Activated naive CD8-positive, alpha-beta T cell treated with anti-CD3 and anti-CD28 coated beads, Interleukin-2, amount 10 ng/mL, durations not matched to agents 7 days and 5 days (primary cell): ENCODE measurements at regions of chr19 and their contacts with region 1.

Region 1: GRCh38 chr19:13978347-13978733 is 26.0 kb downstream of the DCAF15 start:
- DNase-seq: peak; percentile 59
- ATAC-seq: peak; percentile 16
- H3K4me3 Mint-ChIP-seq: peak overlapping the region; percentile 30
- H3K27ac Mint-ChIP-seq: peak overlapping the region; percentile 60
- H3K4me1 Mint-ChIP-seq: peaks cover 45% of the 10 kb centered on the region
- H3K27me3 Mint-ChIP-seq: no peaks in the 10 kb centered on the region

Region 2: DNA sequence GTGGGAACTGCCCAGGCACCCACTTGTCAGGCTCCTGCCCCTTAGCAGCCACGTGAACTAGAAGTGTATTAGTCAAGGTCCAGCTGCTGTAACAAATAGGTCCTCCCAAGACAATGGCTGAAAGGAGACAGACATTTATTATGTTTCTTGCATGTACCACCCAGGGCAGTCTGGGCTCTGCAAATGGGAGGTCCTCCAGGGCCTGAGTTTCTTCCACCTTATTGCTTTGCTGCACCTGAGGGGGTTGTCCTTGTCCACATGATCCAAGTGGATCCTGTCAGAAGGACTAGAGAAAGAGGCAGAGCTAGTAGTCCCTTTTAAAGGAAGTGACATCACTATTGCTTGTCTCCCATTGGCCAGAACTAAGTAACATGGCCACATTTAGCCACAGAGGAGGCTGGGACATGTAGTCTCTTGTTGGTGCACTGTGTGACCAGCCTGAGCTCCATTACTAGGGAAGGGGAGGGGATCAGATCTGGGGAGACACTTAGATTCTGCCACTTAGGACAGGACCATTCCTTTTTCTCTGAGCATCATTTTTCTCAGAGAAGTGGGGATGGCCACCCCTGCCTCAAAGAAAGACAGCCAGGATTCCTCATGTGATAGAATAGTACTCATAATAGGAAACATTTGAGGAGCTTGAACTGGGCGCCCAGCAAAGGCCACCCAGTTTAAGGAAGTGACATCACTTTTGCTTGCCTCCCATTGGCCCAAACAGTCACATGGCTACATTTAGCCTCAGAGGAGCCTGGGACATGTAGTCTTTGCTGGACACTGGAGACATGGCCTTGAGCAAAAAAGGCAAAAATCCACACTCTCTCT is 57.2 kb before region 1 on chr19:
- POLR2A ChIA-PET with region 1: no interaction called
- DNase-seq: no peak
- ATAC-seq: peak; percentile 80
- H3K4me3 Mint-ChIP-seq: no peak overlapping the region
- H3K27ac Mint-ChIP-seq: peak overlapping the region; percentile 58
- H3K4me1 Mint-ChIP-seq: peaks cover 4% of the 10 kb centered on the region
- H3K27me3 Mint-ChIP-seq: no peaks in the 10 kb centered on the region

Region 3: DNA sequence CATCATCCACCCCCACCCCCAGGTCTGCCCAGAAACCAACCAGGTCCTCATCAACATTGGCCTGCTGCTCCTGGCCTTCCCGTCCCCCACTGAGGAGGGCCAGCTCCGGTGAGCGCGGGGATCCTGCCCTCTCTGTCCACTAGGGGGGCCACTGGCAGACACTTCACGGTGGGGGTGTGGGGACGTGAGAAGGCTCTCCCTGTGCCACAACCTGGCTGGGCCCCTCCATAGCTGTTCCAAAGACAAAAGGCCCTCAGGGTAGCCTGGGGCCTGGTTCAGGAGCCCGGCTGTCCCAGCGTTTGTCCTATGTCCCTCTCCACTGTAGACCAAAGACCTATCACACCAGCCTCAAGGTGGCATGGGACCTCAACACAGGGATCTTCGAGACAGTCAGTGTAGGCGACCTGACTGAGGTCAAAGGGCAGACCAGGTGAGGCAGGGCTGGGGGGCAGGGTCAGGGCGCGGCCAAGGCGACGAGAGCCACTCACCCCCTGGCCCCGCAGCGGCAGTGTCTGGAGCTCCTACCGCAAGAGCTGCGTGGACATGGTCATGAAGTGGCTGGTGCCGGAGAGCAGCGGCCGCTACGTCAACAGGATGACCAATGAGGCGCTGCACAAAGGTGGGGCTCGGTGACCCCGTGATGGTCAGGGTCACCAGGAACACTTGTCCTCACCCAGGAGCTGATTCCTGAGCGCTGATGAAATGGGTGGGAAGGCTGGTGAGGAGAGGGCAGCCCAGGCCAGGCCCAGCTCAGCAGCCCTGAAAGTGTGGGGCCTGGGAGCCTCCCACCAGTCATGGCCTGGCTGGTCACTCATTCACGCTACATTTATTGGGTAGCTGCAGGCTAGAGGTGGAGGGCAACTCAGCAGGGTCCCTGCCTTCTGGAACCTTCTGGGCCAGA is 18.1 kb before region 1 on chr19:
- POLR2A ChIA-PET with region 1: interaction called, 10 read pairs
- DNase-seq: no peak
- ATAC-seq: peak; percentile 22
- H3K4me3 Mint-ChIP-seq: no peak overlapping the region
- H3K27ac Mint-ChIP-seq: no peak overlapping the region
- H3K4me1 Mint-ChIP-seq: peaks cover 1% of the 10 kb centered on the region
- H3K27me3 Mint-ChIP-seq: no peaks in the 10 kb centered on the region